ENCODE measurements at regions of chr9 and their contacts with region 1.

Region 1: DNA sequence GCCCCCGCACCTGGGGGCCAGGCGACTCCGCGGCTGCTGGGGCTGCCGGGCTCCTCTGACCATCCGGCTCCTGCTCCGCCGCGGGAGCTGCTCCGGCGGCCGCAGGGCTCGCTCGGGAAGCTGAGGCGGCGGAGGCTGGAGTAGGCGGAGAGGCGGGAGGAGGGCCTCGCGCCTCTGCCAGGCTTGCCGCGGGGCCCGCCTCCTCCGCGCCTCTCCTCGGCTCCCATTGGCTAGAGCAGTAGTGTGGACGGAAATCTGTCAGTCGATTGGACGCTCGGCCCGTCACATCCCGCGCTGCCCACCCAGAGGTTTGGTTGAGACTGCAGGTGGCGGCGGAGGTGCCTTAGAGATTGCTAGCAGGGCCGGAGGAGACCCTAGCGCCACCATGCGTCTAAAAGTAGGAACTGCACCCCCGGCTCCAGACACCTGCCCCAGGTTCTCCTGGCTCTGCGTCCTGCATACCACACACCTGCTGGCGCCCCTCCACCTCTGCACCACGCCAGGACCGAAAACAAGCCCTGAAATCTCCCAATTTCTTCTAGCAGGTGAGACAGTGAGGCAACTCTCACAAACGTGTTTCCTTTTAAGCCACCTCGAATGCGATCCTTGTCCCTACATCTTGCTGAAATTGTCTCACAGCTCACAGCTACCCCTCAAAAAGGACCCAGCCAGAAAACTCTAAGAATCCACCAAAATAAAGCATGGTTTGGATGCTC is at the start of gene SCAI:
- DNase-seq: peak; percentile 96 to 100 (median 99)
- ATAC-seq: peak; percentile 98 to 100 (median 99)
- H3K4me3 ChIP-seq: peak within 1 kb of the TSS; percentile 43 to 77 (median 58)
- H3K27ac ChIP-seq: peak within 1 kb of the TSS in 2 of 4 donors; percentile 44
- H3K4me1 ChIP-seq: peaks cover 0 to 6% (median 0%) of the 10 kb centered on the region in 3 donors
- H3K27me3 ChIP-seq: no peaks in the 10 kb centered on the region
- CTCF ChIP-seq: peak; percentile 99 to 100 (median 100)
- total RNA-seq, gene SCAI: 2.7 to 6.8 (median 3.6) TPM

Region 2: DNA sequence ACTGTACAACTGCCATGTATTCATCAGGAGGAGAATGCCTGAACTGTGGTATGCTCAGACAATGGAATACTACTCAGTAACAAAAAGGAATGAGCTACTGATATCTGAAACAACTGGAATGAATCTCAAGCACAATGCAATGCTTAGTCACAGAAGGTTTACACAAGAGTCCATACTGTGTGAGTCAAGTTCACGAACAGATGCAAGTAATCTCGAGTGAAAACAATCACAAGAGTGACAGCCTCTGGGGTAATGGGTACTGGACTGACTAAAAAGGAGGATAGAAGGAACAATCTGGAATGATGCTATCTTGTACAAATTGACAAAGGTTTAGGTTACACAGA is 183.2 kb before region 1 on chr9:
- intact Hi-C with region 1: loop called in 1 of 3 experiments (anchors 10 kb)
- DNase-seq: no peak
- ATAC-seq: no peak
- H3K4me3 ChIP-seq: no peak overlapping the region
- H3K27ac ChIP-seq: no peak overlapping the region
- H3K4me1 ChIP-seq: no peaks in the 10 kb centered on the region
- H3K27me3 ChIP-seq: no peaks in the 10 kb centered on the region
- CTCF ChIP-seq: no peak